Tibial artery (tissue), 4 donors: ENCODE measurements at regions of chr15 and their contacts with region 1.

Region 1: GRCh38 chr15:35293353-35294130 is 208.4 kb upstream of the NANOGP8 start:
- DNase-seq: no peak
- H3K4me3 ChIP-seq: no peak overlapping the region
- H3K27ac ChIP-seq: no peak overlapping the region
- H3K4me1 ChIP-seq: no peaks in the 10 kb centered on the region
- H3K27me3 ChIP-seq: no peaks in the 10 kb centered on the region
- CTCF ChIP-seq: no peak

Region 2: DNA sequence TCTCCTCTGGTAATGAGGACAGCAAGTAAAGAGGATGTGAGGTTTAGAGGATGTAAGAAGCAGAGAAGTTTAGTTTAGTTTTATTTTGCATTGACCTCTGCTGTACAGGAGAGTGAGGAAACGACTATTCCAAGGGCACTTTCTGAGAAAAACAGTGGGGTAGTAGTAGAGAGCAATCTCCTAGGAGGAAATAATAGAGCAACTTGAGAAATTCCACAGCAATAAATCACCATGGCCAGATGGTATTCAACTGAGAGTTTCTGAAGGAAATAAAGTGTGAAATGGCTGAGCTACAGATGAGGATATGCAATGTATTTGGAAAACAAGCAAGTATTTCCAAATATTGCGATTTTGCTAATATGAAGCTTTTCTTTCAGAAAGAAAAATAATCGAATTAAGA is 133.5 kb after region 1 on chr15:
- intact Hi-C with region 1: no loop called
- DNase-seq: no peak
- H3K4me3 ChIP-seq: no peak overlapping the region
- H3K27ac ChIP-seq: no peak overlapping the region
- H3K4me1 ChIP-seq: peaks cover 0 to 4% (median 0%) of the 10 kb centered on the region in 4 donors
- H3K27me3 ChIP-seq: no peaks in the 10 kb centered on the region
- CTCF ChIP-seq: no peak

Region 3: DNA sequence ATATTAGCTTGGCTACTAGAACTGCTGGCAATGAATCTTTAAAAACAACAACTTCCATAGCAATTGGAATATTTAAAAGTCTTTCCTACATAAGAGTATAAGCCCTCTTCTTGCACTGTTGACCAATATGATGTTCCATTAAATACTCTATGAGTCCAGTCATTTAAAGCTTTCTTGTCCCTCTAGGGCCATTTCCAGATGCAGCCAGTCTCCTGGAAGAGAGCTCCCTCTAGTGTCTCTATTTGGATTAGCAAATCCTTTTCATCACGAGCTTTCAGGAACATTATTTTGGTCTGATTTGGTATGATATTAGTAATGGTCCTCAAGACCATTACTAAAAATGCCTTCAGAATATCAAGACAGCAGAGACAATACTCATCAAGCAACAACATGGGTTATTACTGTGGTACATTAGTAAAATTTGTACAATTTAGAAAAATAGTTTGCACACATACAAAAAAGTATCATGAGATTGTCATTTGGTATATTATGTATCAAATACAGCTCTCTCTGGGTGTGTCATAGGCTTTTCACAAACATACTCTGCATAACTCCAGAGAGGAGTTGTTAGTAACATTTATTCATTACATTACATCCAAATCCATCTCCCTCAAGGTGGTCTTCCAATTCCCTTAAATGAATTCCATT is 151.1 kb after region 1 on chr15:
- intact Hi-C with region 1: loop called (anchors 10 kb)
- DNase-seq: no peak
- H3K4me3 ChIP-seq: no peak overlapping the region
- H3K27ac ChIP-seq: no peak overlapping the region
- H3K4me1 ChIP-seq: peaks cover 0 to 6% (median 2%) of the 10 kb centered on the region in 4 donors
- H3K27me3 ChIP-seq: no peaks in the 10 kb centered on the region
- CTCF ChIP-seq: peak; percentile 57 to 59

Region 4: GRCh38 chr15:36178303-36178633 is 884.7 kb after region 1 on chr15:
- intact Hi-C with region 1: no loop called
- DNase-seq: no peak
- H3K4me3 ChIP-seq: no peak overlapping the region
- H3K27ac ChIP-seq: peak overlapping the region in 1 of 2 donors; percentile 51
- H3K4me1 ChIP-seq: peaks cover 0 to 35% (median 10%) of the 10 kb centered on the region in 4 donors
- H3K27me3 ChIP-seq: no peaks in the 10 kb centered on the region
- CTCF ChIP-seq: no peak